ENCODE measurements at regions of chr10 and their contacts with region 1.

Region 1: DNA sequence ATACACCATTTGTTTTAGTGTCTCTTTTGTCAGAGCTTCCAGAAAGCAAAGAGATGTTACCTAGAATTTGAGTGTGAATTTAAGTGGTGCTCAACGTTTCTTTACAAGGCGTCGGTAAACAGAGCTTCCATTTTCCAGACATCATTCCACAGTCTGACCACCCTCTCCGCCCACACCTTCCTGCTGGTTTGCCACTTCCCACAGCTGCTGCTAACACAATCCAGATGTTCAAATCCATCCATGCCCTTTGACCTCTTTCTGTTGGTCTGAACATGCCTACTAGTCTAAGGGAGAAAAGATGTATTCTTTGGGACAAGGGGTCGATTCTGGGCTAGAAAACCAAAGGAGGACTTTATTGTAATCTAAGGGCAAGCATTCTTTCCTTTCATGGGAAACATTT is 86.1 kb downstream of the FAM107B start:
- DNase-seq: no peak
- ATAC-seq: no peak
- H3K4me3 ChIP-seq: no peak overlapping the region
- H3K4me3 Mint-ChIP-seq: no peak overlapping the region
- H3K27ac ChIP-seq: no peak overlapping the region
- H3K27ac Mint-ChIP-seq: no peak overlapping the region
- H3K4me1 ChIP-seq: no peaks in the 10 kb centered on the region
- H3K4me1 Mint-ChIP-seq: peaks cover 9% of the 10 kb centered on the region
- H3K27me3 ChIP-seq: no peaks in the 10 kb centered on the region
- H3K27me3 Mint-ChIP-seq: no peaks in the 10 kb centered on the region
- CTCF ChIP-seq: no peak

Region 2: DNA sequence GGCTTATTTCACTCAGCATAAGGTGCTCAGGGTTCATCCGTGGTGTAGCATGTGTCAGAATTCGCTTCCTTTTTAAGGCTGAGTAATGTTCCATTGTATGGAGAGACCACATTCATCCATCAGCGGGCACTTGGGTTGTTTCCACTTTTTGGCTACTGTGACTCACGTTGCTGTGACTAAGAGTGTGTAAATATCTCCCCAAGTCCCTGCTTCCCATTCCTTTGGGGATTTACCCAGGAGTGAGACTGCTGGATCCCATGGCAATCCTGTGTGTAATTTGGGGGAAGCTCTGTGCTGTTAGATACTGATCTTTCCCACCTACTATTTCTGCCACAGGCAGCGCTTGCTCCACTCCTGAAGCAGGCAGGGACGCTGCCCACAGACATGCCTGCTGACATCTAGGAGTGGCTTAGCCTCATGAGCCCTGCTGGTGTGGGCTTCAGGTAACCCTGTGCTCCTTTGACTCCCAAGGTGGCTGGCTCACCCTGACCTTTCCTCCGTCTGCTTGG is 703.9 kb before region 1 on chr10:
- CTCF ChIA-PET with region 1: no interaction called
- POLR2A ChIA-PET with region 1: no interaction called
- intact Hi-C with region 1: no loop called
- DNase-seq: no peak
- ATAC-seq: no peak
- H3K4me3 ChIP-seq: no peak overlapping the region
- H3K4me3 Mint-ChIP-seq: no peak overlapping the region
- H3K27ac ChIP-seq: no peak overlapping the region
- H3K27ac Mint-ChIP-seq: no peak overlapping the region
- H3K4me1 ChIP-seq: no peaks in the 10 kb centered on the region
- H3K4me1 Mint-ChIP-seq: peaks cover 7% of the 10 kb centered on the region
- H3K27me3 ChIP-seq: no peaks in the 10 kb centered on the region
- H3K27me3 Mint-ChIP-seq: no peaks in the 10 kb centered on the region
- CTCF ChIP-seq: no peak

Region 3: GRCh38 chr10:14173706-14174594 is 514.7 kb before region 1 on chr10:
- CTCF ChIA-PET with region 1: no interaction called
- POLR2A ChIA-PET with region 1: no interaction called
- intact Hi-C with region 1: no loop called
- DNase-seq: peak; percentile 39
- ATAC-seq: peak; percentile 28
- H3K4me3 ChIP-seq: peak overlapping the region; percentile 3 to 55 (median 50)
- H3K4me3 Mint-ChIP-seq: peak overlapping the region; percentile 87
- H3K27ac ChIP-seq: no peak overlapping the region
- H3K27ac Mint-ChIP-seq: no peak overlapping the region
- H3K4me1 ChIP-seq: peaks cover 16 to 18% of the 10 kb centered on the region in 2 donors
- H3K4me1 Mint-ChIP-seq: peaks cover 16% of the 10 kb centered on the region
- H3K27me3 ChIP-seq: peaks cover 0 to 51% (median 34%) of the 10 kb centered on the region in 4 experiments
- H3K27me3 Mint-ChIP-seq: peaks cover 72% of the 10 kb centered on the region
- CTCF ChIP-seq: no peak

Region 4: DNA sequence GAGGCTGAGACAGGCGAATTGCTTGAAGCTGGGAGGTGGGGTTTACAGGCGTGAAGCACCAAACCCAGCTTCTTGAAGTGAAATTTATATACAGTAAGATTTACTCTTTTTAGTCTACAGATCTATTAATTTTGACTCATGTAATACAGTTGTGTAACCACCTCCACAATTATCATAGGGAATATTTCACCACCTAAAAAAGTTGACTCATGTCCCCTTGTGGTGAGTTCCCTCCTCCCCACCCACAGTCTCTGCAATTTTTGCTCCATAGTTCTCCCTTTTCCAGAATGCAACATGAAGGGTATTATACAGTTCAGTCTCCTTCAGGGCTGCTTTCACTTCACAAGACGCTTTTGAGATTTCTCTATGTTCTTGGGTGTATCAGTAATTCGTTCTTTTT is 70.8 kb before region 1 on chr10:
- CTCF ChIA-PET with region 1: no interaction called
- POLR2A ChIA-PET with region 1: interaction called, 10 read pairs
- intact Hi-C with region 1: no loop called
- DNase-seq: no peak
- ATAC-seq: no peak
- H3K4me3 ChIP-seq: no peak overlapping the region
- H3K4me3 Mint-ChIP-seq: no peak overlapping the region
- H3K27ac ChIP-seq: no peak overlapping the region
- H3K27ac Mint-ChIP-seq: no peak overlapping the region
- H3K4me1 ChIP-seq: peaks cover 14 to 21% of the 10 kb centered on the region in 2 donors
- H3K4me1 Mint-ChIP-seq: peaks cover 27% of the 10 kb centered on the region
- H3K27me3 ChIP-seq: no peaks in the 10 kb centered on the region
- H3K27me3 Mint-ChIP-seq: no peaks in the 10 kb centered on the region
- CTCF ChIP-seq: no peak

Region 5: GRCh38 chr10:14982744-14983143 is 294.1 kb after region 1 on chr10:
- CTCF ChIA-PET with region 1: no interaction called
- POLR2A ChIA-PET with region 1: no interaction called
- intact Hi-C with region 1: no loop called
- DNase-seq: no peak
- ATAC-seq: no peak
- H3K4me3 ChIP-seq: no peak overlapping the region
- H3K4me3 Mint-ChIP-seq: no peak overlapping the region
- H3K27ac ChIP-seq: no peak overlapping the region
- H3K27ac Mint-ChIP-seq: no peak overlapping the region
- H3K4me1 ChIP-seq: no peaks in the 10 kb centered on the region
- H3K4me1 Mint-ChIP-seq: no peaks in the 10 kb centered on the region
- H3K27me3 ChIP-seq: no peaks in the 10 kb centered on the region
- H3K27me3 Mint-ChIP-seq: peaks cover 15% of the 10 kb centered on the region
- CTCF ChIP-seq: no peak

Region 6: DNA sequence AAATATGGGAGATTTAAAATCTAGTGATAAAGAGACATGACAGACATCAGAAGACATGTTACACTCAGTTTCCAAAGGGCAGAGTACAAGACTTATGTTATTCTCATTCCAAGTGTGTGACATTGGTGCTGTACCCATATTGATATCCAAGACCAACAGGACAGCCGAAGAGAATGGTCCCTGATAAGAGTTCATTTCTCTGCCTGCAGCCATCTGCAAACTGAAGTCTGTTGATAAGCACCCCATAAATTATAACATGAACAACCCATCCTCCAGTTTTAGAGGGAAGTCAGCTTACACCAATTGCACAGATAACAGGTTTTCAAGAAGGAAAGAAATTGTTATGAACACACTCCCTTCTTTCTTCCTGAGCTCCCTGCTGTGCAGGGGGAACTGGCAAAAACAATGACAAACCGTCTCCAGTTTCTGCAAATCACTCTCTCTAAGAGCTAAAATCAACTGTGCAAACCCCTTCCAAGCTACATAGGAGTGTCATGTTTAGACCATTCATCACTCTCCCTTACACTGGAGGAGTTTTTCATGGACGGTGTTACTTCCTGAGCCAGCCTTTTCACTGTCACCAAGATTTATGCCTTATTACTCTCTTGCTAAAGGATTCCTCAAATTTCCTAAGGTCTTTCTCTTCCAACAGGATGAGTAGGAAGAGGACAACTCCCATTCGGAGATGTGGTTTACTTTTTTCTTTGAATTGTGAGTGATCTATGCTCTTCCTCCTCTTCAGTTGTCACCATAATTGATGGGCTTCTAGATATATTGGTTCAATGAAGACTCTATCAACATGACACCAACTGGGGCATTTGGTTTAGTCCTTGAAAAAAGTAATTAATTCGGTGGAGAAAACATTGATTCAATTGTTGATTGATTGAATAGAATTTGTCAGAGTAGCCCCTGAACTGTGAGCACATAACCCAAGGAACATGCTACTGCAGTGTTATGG is 762.8 kb after region 1 on chr10:
- CTCF ChIA-PET with region 1: no interaction called
- POLR2A ChIA-PET with region 1: no interaction called
- intact Hi-C with region 1: no loop called
- DNase-seq: no peak
- ATAC-seq: no peak
- H3K4me3 ChIP-seq: no peak overlapping the region
- H3K4me3 Mint-ChIP-seq: no peak overlapping the region
- H3K27ac ChIP-seq: no peak overlapping the region
- H3K27ac Mint-ChIP-seq: no peak overlapping the region
- H3K4me1 ChIP-seq: no peaks in the 10 kb centered on the region
- H3K4me1 Mint-ChIP-seq: no peaks in the 10 kb centered on the region
- H3K27me3 ChIP-seq: peaks cover 0 to 3% (median 0%) of the 10 kb centered on the region in 4 experiments
- H3K27me3 Mint-ChIP-seq: peaks cover 26% of the 10 kb centered on the region
- CTCF ChIP-seq: no peak